OCI-LY7 (cell line): ENCODE measurements at regions of chr7 and their contacts with region 1.

Region 1: DNA sequence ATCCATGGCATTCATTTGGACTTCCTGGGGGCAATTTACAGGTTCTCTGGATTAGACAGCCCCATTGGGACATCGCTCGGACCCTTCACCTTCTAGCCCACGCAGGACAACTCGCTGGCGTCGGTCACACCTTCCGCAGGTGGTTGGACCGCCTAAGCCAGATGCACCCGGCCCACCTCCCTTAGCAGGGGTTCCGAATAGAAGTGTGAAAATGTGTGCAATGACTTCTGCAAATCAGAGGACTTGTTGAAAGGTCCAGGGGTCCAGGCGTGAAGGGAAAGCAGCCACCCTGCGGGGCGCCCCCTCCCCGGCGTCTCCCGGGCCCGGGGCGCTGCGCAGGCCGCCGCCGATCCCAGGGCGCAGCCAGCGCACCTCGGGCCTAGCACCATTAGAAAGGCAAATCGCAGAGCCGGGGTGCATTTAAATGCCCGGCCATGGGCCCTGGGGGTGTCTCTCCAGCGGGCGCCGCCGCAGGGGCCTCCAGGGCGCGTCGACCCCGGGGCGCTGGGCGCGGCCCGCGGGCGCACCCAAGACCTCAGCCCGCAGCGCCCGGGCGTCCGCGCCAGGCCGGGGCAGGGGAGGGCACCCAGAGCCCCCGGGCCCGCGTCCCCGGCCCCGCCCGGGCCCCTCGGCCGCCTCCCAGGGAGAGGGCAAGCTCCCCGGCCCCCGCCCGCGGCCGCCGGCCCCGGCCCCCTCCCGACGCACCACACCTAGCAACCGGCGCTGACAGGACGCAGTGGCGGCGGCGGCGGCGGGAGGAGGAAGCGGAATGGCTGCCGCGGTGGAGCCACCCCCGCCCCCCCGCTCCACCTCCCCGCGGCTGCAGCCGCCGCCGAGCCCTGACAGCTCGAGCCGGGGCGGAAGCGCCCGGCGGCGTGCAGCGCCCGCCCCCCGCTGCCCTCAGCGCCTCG is 1.2 kb downstream of the JAZF1 start:
- DNase-seq: peak; percentile 80
- H3K4me3 ChIP-seq: peak overlapping the region; percentile 70
- H3K27ac ChIP-seq: no peak overlapping the region
- H3K4me1 ChIP-seq: peaks cover 84% of the 10 kb centered on the region
- CTCF ChIP-seq: no peak

Region 2: GRCh38 chr7:28096713-28097112 is 82.7 kb before region 1 on chr7:
- CTCF ChIA-PET with region 1: no interaction called
- POLR2A ChIA-PET with region 1: interaction called, 3 read pairs
- intact Hi-C with region 1: loop called (anchors 5 kb)
- DNase-seq: peak; percentile 60
- H3K4me3 ChIP-seq: no peak overlapping the region
- H3K27ac ChIP-seq: no peak overlapping the region
- H3K4me1 ChIP-seq: peaks cover 7% of the 10 kb centered on the region
- CTCF ChIP-seq: peak; percentile 97

Region 3: GRCh38 chr7:28155019-28155660 is 24.2 kb before region 1 on chr7:
- CTCF ChIA-PET with region 1: no interaction called
- POLR2A ChIA-PET with region 1: interaction called, 7 read pairs
- intact Hi-C with region 1: loop called (anchors 1 kb)
- DNase-seq: peak; percentile 84
- H3K4me3 ChIP-seq: peak overlapping the region; percentile 55
- H3K27ac ChIP-seq: peak overlapping the region; percentile 97
- H3K4me1 ChIP-seq: peaks cover 99% of the 10 kb centered on the region
- CTCF ChIP-seq: no peak

Region 4: GRCh38 chr7:28165961-28166955 is 13.1 kb before region 1 on chr7:
- CTCF ChIA-PET with region 1: interaction called, 10 read pairs
- POLR2A ChIA-PET with region 1: interaction called, 60 read pairs
- intact Hi-C with region 1: loop called (anchors 2 kb)
- DNase-seq: no peak
- H3K4me3 ChIP-seq: peak overlapping the region; percentile 49
- H3K27ac ChIP-seq: peak overlapping the region; percentile 76
- H3K4me1 ChIP-seq: peaks cover 99% of the 10 kb centered on the region
- CTCF ChIP-seq: no peak

Region 5: DNA sequence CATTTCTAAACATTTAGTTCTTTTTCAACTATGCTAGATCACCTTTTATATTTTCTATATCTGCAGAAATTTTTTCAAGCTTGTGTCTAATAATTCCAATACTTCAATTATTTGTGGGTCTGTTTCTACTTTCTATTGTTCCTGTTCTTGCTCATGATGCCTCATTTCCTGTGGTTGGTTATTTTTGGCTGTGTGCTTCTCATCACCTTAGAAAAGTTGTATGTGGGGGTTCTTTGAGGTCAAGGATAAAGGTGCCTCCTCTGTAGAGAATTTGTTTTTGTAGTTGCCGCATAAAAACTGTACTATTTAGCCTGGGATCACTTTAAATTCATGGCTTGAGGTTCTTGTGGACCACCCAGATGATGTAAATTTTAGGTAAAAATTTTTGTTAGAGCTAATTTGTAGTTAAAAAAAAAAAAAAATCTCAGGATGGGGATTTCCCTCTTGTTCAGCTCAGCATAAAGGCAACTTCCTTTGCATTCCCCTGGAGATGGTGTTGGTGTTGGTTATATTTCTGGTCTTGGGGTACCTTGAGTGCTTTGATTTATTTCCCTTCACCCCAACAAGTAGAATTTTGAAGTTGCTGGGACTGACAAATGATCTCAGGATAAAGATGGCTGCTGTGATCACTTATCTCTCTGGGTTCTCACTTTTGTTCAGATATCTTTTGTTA is 28.2 kb after region 1 on chr7:
- CTCF ChIA-PET with region 1: no interaction called
- POLR2A ChIA-PET with region 1: interaction called, 19 read pairs
- intact Hi-C with region 1: no loop called
- DNase-seq: peak; percentile 39
- H3K4me3 ChIP-seq: peak overlapping the region; percentile 14
- H3K27ac ChIP-seq: peak overlapping the region; percentile 11
- H3K4me1 ChIP-seq: peaks cover 20% of the 10 kb centered on the region
- CTCF ChIP-seq: no peak

Region 6: GRCh38 chr7:28272461-28272877 is 93.1 kb after region 1 on chr7:
- CTCF ChIA-PET with region 1: no interaction called
- POLR2A ChIA-PET with region 1: no interaction called
- intact Hi-C with region 1: loop called (anchors 5 kb)
- DNase-seq: peak; percentile 47
- H3K4me3 ChIP-seq: no peak overlapping the region
- H3K27ac ChIP-seq: no peak overlapping the region
- H3K4me1 ChIP-seq: peaks cover 10% of the 10 kb centered on the region
- CTCF ChIP-seq: peak; percentile 83